Psoas muscle (tissue), 8 donors: ENCODE measurements at regions of chr22 and their contacts with region 1.

Region 1: GRCh38 chr22:42868751-42869251 is 11.7 kb upstream of the ARFGAP3 start:
- DNase-seq: peak; percentile 75 to 91
- ATAC-seq: peak; percentile 80 to 89 (median 84)
- H3K4me3 ChIP-seq: no peak overlapping the region
- H3K27ac ChIP-seq: peak overlapping the region; percentile 76
- H3K4me1 ChIP-seq: peaks cover 32% of the 10 kb centered on the region
- H3K27me3 ChIP-seq: no peaks in the 10 kb centered on the region
- CTCF ChIP-seq: no peak

Region 2: DNA sequence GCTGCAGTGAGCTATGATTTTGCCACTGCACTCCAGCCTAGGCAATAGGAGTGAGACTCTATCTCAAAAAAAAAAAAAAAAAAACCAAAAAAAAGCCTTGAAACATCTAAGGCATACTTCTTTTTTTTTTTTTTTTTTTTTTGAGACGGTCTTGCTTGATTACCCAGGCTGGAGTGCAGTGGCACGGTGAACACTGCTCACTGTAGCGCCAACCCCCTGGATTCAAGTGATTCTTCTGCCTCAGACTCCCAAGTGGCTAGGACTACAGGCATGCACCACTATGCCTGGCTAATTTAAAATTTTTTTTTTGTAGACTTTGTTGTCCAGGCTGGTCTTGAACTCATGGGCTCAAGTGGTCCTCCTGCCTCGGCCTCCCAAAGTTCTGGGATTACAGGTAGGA is 31.2 kb before region 1 on chr22:
- intact Hi-C with region 1: no loop called
- DNase-seq: no peak
- ATAC-seq: no peak
- H3K4me3 ChIP-seq: no peak overlapping the region
- H3K27ac ChIP-seq: no peak overlapping the region
- H3K4me1 ChIP-seq: no peaks in the 10 kb centered on the region
- H3K27me3 ChIP-seq: no peaks in the 10 kb centered on the region
- CTCF ChIP-seq: no peak

Region 3: DNA sequence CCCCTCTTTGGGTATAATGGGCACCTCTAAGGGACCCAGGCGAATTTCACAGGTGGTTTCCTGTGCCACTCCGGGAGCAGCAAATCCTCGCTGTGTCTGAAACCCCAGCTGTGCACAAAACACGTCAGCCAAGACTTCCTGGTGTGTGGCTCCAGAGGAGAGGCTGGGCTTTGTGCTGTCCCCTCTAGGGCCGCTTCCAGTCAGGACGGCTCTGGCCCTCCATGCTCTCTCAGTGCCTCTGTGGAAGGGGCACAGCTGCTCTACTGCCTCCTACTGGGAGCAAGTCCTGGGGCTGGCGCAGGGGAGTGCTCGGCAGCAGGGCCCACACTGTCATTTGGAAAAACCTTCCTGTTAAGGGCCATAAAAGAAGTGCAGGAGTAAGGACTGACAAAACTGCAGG is 12.0 kb after region 1 on chr22:
- intact Hi-C with region 1: no loop called
- DNase-seq: no peak
- ATAC-seq: no peak
- H3K4me3 ChIP-seq: peak overlapping the region; percentile 55
- H3K27ac ChIP-seq: peak overlapping the region; percentile 83
- H3K4me1 ChIP-seq: peaks cover 42% of the 10 kb centered on the region
- H3K27me3 ChIP-seq: no peaks in the 10 kb centered on the region
- CTCF ChIP-seq: peak; percentile 8

Region 4: GRCh38 chr22:42901790-42902508 is 33.1 kb after region 1 on chr22:
- intact Hi-C with region 1: loop called in 1 of 2 experiments (anchors 5 kb)
- DNase-seq: peak; percentile 50 to 86
- ATAC-seq: peak; percentile 76 to 86 (median 80)
- H3K4me3 ChIP-seq: no peak overlapping the region
- H3K27ac ChIP-seq: peak overlapping the region; percentile 90
- H3K4me1 ChIP-seq: peaks cover 52% of the 10 kb centered on the region
- H3K27me3 ChIP-seq: no peaks in the 10 kb centered on the region
- CTCF ChIP-seq: peak; percentile 14

Region 5: DNA sequence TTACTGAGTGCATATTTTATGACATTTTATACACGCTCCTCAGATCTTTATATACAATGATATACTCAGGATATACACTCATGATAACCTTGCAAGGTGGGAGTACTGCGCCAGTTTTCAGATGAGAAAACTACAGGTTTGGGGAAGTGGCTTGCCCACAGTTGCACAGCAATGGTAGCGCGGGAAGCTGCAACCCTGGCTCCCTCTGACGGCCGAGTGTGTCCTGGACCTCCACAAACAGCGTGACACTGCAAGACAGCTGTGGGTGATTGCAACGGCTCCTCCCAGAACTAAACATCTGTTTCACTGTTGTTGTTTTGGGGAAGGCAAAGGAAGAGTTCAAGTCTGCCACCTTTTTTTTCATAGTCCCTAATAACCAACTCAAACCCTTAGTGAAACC is 99.1 kb after region 1 on chr22:
- intact Hi-C with region 1: loop called in 1 of 2 experiments (anchors 5 kb)
- DNase-seq: peak; percentile 67 to 85
- ATAC-seq: peak; percentile 57 to 74 (median 70)
- H3K4me3 ChIP-seq: no peak overlapping the region
- H3K27ac ChIP-seq: peak overlapping the region; percentile 88
- H3K4me1 ChIP-seq: peaks cover 42% of the 10 kb centered on the region
- H3K27me3 ChIP-seq: no peaks in the 10 kb centered on the region
- CTCF ChIP-seq: peak; percentile 35

Region 6: GRCh38 chr22:43014869-43015676 is 146.3 kb after region 1 on chr22 and contains the start of gene PACSIN2:
- intact Hi-C with region 1: loop called in 1 of 2 experiments (anchors 5 kb)
- DNase-seq: peak; percentile 100
- ATAC-seq: peak; percentile 98 to 100 (median 98)
- H3K4me3 ChIP-seq: peak within 1 kb of the TSS; percentile 80
- H3K27ac ChIP-seq: peak within 1 kb of the TSS; percentile 82
- H3K4me1 ChIP-seq: peaks cover 13% of the 10 kb centered on the region
- H3K27me3 ChIP-seq: no peaks in the 10 kb centered on the region
- CTCF ChIP-seq: no peak
- total RNA-seq, gene PACSIN2: 27.9 to 52.2 (median 38.4) TPM

Region 7: GRCh38 chr22:43031617-43032016 is 162.8 kb after region 1 on chr22:
- intact Hi-C with region 1: loop called in 1 of 2 experiments (anchors 5 kb)
- DNase-seq: no peak
- ATAC-seq: no peak
- H3K4me3 ChIP-seq: no peak overlapping the region
- H3K27ac ChIP-seq: no peak overlapping the region
- H3K4me1 ChIP-seq: no peaks in the 10 kb centered on the region
- H3K27me3 ChIP-seq: no peaks in the 10 kb centered on the region
- CTCF ChIP-seq: no peak

Region 8: DNA sequence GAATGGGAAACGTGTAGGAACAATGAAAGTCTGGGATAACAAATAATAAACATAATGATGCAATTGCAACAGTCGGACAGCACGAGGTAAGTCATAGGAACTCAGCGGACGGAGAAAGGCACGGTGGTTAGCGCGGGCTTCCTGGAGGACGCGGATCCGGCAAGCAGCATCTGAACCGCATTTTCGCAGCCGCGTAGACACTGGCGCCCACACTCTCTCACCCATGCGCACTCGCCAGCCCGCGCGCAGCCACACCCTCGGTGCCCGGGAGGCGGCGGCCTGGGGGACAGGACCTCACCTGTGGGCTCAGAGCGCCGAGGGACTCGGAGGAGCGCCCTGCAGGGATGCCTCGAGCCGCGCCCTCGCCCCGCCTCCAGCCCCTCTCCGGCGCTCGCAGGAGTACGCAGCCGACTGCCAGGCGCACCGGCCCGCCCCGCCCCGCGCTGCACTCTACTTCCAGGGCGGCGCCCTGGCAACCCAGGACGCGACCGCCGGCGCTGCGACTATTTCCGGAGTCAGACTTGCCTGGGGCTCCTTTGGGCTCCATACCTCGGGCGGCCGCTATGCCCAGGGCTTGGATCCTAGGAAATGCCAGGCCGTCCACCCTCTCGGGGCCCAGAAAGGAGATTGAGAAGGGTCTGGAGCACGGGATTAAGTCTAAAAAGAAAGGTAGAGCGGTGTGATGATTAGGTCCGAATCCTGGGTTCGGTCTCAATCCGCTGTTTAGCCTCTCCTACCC is 220.3 kb after region 1 on chr22 and contains the start of gene TTLL1:
- intact Hi-C with region 1: loop called in 1 of 2 experiments (anchors 5 kb)
- DNase-seq: peak; percentile 90 to 93
- ATAC-seq: peak; percentile 94 to 99 (median 96)
- H3K4me3 ChIP-seq: peak within 1 kb of the TSS; percentile 76
- H3K27ac ChIP-seq: peak within 1 kb of the TSS; percentile 46
- H3K4me1 ChIP-seq: no peaks in the 10 kb centered on the region
- H3K27me3 ChIP-seq: no peaks in the 10 kb centered on the region
- CTCF ChIP-seq: no peak
- total RNA-seq, gene TTLL1: 1.2 to 3.0 (median 2.0) TPM